Transverse colon (tissue), 4 donors: ENCODE measurements at regions of chr18 and their contacts with region 1.

Region 1: DNA sequence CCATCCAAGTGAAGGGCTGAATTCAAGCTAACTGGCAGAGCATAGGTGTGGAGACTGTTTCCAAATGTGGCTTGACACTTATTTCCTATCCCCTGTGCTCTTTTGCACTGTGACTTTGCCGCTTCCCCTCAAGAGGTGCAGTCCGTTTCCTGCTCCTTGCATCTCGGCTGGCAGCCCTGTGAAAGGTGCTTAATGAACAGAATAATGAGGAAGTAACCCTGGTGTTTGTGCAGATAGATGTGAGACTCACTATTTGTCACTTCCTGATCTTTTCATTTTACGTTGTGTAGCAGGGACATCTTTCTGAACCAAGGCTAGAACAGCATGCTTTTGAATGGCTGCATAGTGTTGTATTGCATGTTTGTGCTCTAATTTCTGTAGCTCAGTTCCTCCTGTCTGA is 60.8 kb downstream of the CEP192 start:
- DNase-seq: no peak
- H3K4me3 ChIP-seq: no peak overlapping the region
- H3K27ac ChIP-seq: no peak overlapping the region
- H3K4me1 ChIP-seq: no peaks in the 10 kb centered on the region
- H3K27me3 ChIP-seq: no peaks in the 10 kb centered on the region
- CTCF ChIP-seq: no peak
- EP300 ChIP-seq: no peak
- POLR2A ChIP-seq: no peak

Region 2: DNA sequence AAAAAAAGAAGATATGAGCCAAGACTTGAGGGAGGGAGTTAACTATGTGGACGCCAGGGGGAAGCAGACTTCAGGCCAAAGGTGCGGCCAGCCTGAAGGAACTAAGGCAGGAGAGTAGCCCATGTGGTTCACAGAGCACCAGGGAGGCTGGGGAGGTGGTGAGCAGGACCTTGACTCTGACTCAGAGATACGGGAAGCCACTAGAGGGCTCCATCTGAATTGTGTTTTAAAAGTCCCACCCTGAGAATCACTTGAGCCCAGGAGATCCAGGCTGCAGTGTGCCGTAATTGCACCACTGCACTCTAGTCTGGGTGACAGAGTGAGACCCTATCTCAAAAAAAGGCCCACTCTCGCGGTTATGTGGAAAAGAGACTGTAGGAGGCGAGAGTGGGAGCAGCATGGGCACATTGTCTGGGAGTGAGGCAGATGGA is 48.5 kb before region 1 on chr18:
- in situ Hi-C with region 1: no loop called
- intact Hi-C with region 1: loop called (anchors 2 kb)
- DNase-seq: no peak
- H3K4me3 ChIP-seq: no peak overlapping the region
- H3K27ac ChIP-seq: no peak overlapping the region
- H3K4me1 ChIP-seq: peaks cover 0 to 3% (median under 1%) of the 10 kb centered on the region in 4 donors
- H3K27me3 ChIP-seq: no peaks in the 10 kb centered on the region
- CTCF ChIP-seq: peak in 3 of 5 experiments; percentile 17 to 21 (median 19)
- EP300 ChIP-seq: no peak
- POLR2A ChIP-seq: no peak